ENCODE measurements at regions of chr3 and their contacts with region 1.

Region 1: DNA sequence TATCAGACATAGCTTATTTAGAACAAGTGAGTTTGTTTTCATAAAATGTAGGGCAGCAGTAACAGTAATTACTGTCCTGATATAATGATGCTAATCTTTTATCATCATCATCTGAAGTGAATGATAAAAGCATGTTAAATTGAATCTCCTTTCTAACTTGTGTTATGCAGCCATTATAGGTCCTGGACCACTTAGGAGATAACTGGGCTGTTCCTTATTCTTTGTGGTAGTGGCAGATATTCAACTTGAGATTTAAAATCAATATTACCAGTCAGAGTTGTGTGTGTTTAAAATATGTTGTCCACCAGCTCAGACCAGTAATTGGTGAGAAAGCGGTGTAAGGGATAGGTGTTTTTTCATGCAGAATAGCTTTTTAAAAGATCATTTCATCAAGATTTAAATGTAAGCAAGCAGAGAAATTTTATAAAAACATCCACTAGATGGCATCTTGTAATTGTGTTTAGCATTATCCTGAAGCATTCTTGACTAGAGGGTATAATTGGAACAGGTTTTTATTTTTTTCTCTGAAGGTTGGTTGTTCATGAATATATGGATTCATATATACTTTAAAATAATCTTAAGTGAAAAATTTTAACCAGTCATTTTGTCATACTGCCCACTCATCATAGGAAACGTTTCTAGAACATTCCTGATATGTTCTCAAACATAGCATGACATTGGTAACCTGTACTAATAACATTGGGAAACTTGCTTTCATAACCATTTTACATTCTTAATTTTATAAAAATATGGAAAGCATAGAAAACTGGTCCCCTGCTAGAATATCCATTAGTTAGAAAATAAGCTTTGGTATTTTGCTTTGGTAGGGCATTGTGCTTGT is 153.9 kb downstream of the BBX start:
- DNase-seq: no peak
- ATAC-seq: peak; percentile 57
- H3K4me3 ChIP-seq: no peak overlapping the region
- H3K27ac ChIP-seq: no peak overlapping the region
- H3K4me1 ChIP-seq: peaks cover 12% of the 10 kb centered on the region
- H3K27me3 ChIP-seq: no peaks in the 10 kb centered on the region
- CTCF ChIP-seq: peak; percentile 24 to 47 (median 39); a peak in 3 of 6 replicates
- EP300 ChIP-seq: no peak
- POLR2A ChIP-seq: no peak
- RAD21 ChIP-seq: peak; percentile 57

Region 2: DNA sequence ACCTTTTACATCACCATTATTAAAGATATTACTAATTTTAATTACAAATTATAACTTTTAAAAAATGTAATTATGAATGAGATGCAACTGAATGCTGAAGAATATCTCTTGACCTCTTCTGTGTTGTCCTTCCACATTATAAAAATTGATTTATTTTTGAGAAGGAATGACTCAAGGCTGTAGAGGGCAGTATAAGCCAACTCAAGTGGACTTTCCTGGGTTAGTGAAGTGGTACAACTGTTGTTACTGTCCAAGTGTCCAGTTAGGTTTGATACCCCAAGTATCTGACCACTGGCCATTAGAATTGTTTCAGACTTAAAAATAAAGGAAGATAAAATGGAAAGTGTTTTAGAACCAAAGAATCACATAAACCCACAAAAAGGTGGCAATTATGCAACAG is 102.0 kb before region 1 on chr3:
- CTCF ChIA-PET with region 1: interaction called, 81 read pairs
- POLR2A ChIA-PET with region 1: interaction called, 5 read pairs
- RAD21 ChIA-PET with region 1: interaction called, 13 read pairs
- SMC1A ChIA-PET with region 1: interaction called, 44 read pairs
- in situ Hi-C with region 1: no loop called
- intact Hi-C with region 1: no loop called
- DNase-seq: no peak
- ATAC-seq: peak; percentile 89
- H3K4me3 ChIP-seq: no peak overlapping the region
- H3K27ac ChIP-seq: no peak overlapping the region
- H3K4me1 ChIP-seq: no peaks in the 10 kb centered on the region
- H3K27me3 ChIP-seq: no peaks in the 10 kb centered on the region
- CTCF ChIP-seq: peak; percentile 45 to 70 (median 47); a peak in 5 of 6 replicates
- EP300 ChIP-seq: no peak
- POLR2A ChIP-seq: no peak
- RAD21 ChIP-seq: peak; percentile 85

Region 3: DNA sequence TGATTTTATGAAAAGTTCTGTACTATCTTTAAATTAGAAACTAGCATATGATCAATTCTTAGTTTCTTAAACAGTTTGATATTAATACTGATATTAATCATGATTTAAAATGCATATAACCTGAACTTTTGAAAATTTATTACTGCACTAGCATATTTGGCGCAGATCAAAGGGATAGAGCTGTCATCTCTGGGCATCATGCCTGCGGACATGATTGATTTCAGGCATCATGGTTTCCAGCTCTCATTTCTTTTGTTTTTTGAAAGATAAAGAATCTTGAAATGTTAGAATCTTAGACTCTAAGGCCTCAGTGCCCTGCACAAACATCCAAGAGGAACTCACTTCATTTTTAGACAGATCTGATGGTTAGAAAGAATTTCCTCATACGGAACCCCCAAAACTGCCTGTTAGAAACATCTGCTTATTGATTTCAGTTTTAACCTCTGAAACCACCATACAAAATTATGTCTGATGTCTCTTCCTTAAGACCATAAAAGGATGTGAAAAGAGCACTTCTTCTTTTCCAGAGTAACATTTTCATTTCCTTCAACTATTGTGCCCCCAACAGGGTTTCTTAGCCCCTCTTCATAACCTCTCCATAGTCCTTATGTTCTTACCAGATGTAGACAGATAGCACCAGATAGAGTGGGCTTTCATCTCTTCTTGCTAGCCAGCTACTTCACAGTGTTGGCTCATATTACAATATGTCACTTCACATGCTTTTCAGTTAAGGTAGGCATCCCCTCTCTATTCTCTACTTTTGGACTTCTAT is 43.2 kb before region 1 on chr3:
- CTCF ChIA-PET with region 1: interaction called, 30 read pairs
- POLR2A ChIA-PET with region 1: no interaction called
- RAD21 ChIA-PET with region 1: interaction called, 17 read pairs
- SMC1A ChIA-PET with region 1: interaction called, 18 read pairs
- in situ Hi-C with region 1: no loop called
- intact Hi-C with region 1: no loop called
- DNase-seq: peak; percentile 56
- ATAC-seq: peak; percentile 94
- H3K4me3 ChIP-seq: peak overlapping the region; percentile 40; the same call in 1 of the 2 replicates
- H3K27ac ChIP-seq: peak overlapping the region; percentile 63
- H3K4me1 ChIP-seq: peaks cover 20% of the 10 kb centered on the region
- H3K27me3 ChIP-seq: no peaks in the 10 kb centered on the region
- CTCF ChIP-seq: no peak
- EP300 ChIP-seq: peak; percentile 63 to 77
- POLR2A ChIP-seq: no peak
- RAD21 ChIP-seq: no peak

Region 4: GRCh38 chr3:107690522-107691138 is 13.9 kb after region 1 on chr3:
- CTCF ChIA-PET with region 1: interaction called, 98 read pairs
- POLR2A ChIA-PET with region 1: interaction called, 3 read pairs
- RAD21 ChIA-PET with region 1: interaction called, 7 read pairs
- SMC1A ChIA-PET with region 1: interaction called, 34 read pairs
- in situ Hi-C with region 1: no loop called
- intact Hi-C with region 1: no loop called
- DNase-seq: no peak
- ATAC-seq: peak; percentile 90
- H3K4me3 ChIP-seq: no peak overlapping the region
- H3K27ac ChIP-seq: no peak overlapping the region
- H3K4me1 ChIP-seq: no peaks in the 10 kb centered on the region
- H3K27me3 ChIP-seq: no peaks in the 10 kb centered on the region
- CTCF ChIP-seq: peak; percentile 32 to 50 (median 39); a peak in 4 of 6 replicates
- EP300 ChIP-seq: no peak
- POLR2A ChIP-seq: no peak
- RAD21 ChIP-seq: peak; percentile 33; the same call in 1 of the 2 replicates

Region 5: DNA sequence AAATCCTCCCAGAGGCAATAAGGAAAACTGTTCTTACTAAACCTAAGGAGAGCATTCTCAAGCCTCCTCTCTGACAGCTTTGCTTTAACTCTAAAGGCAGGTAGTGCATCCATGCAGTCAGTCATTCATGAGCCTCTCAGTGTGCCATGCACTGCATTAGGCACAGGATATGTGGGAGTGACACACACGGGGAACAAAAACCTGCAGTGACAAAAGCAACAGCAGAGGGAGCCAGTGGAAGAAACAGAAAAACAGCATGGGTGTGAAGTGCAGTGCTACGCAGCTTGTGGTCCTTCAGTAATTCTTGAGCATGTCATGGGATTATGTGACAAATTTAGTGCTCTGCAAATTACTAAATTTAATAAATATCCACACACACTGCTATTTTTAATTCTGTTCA is 76.8 kb after region 1 on chr3:
- CTCF ChIA-PET with region 1: interaction called, 78 read pairs
- POLR2A ChIA-PET with region 1: no interaction called
- RAD21 ChIA-PET with region 1: interaction called, 3 read pairs
- SMC1A ChIA-PET with region 1: interaction called, 23 read pairs
- in situ Hi-C with region 1: no loop called
- intact Hi-C with region 1: no loop called
- DNase-seq: no peak
- ATAC-seq: peak; percentile 70
- H3K4me3 ChIP-seq: no peak overlapping the region
- H3K27ac ChIP-seq: no peak overlapping the region
- H3K4me1 ChIP-seq: no peaks in the 10 kb centered on the region
- H3K27me3 ChIP-seq: no peaks in the 10 kb centered on the region
- CTCF ChIP-seq: peak; percentile 41 to 45 (median 44); a peak in 5 of 6 replicates
- EP300 ChIP-seq: no peak
- POLR2A ChIP-seq: no peak
- RAD21 ChIP-seq: peak; percentile 36; the same call in 1 of the 2 replicates

Region 6: DNA sequence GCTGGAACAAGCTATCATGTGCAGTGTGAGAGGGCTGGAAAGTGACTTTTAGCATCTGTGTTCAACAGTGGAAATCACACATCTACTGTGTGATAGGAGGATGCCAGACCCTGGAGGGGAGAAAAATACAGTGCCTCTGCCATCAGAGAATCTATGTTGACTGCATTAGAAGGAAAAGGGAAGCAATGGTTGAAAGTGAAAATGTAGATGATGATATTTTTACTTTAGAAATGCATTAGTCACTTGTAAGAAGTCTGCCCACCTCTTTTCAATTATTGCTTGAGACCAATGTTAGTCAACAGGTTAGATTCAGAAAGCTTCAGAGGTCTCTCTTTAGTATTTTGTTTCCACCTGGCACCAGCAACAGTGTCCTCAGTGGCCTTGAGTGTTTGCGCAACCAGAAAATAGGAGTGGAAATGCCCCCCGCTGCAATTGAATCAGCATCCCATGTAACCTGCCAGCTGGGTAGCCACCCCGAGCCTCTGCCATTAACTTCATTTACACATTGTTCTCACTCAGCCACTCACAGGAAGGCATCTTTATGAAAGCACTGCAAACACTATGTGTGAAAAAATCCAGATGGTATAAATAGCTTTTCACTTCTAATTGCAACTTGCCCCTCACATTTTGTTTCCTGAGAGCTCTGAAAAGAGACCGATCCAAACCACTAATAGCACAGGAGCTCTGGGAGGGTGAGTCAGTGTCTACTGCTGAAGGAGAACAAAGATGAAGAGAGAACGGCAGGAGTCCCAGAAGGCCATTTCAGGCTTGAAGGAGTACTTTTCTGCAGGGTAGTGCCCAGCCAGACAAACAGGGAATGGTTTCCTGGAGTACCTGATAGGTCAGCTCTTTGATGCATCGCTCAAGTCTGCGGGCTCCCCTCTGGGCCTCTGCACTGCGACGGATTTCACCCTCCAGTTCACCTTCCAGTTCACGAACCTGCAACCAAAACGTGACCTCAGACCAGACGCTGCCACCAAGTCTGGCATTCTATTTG is 711.7 kb after region 1 on chr3:
- CTCF ChIA-PET with region 1: no interaction called
- POLR2A ChIA-PET with region 1: no interaction called
- RAD21 ChIA-PET with region 1: no interaction called
- SMC1A ChIA-PET with region 1: no interaction called
- in situ Hi-C with region 1: no loop called
- intact Hi-C with region 1: no loop called
- DNase-seq: peak; percentile 70
- ATAC-seq: peak; percentile 84
- H3K4me3 ChIP-seq: peak overlapping the region; percentile 42
- H3K27ac ChIP-seq: peak overlapping the region; percentile 33; the same call in 1 of the 2 replicates
- H3K4me1 ChIP-seq: peaks cover 33% of the 10 kb centered on the region
- H3K27me3 ChIP-seq: no peaks in the 10 kb centered on the region
- CTCF ChIP-seq: no peak
- EP300 ChIP-seq: peak; percentile 38 to 48; a peak in 1 of 4 replicates
- POLR2A ChIP-seq: no peak
- RAD21 ChIP-seq: no peak

Region 7: DNA sequence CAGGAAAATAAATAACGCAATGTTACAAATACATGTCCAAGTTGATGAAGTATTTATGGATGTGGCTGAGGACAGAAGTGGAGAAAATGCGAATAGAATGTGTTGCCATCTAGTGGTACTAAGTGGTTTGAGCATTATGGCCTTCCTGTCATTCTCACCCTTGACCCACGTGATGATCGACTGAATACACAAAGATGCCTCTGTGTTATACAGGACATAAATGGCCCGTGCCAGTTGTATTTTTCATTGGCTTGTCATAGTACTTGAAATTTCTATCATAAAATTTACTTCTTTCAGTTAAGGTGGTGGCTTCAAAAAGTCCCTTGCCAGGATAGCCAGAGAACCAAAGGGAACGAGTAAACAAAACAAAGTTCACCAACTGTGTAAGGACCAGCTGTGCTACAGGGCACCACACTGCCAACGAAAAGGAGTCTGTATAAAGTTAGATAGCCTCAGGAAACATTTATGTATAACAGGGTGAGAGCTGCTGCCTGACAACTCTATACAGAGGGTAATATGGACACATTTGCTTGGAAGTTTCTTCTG is 730.0 kb after region 1 on chr3:
- CTCF ChIA-PET with region 1: interaction called, 10 read pairs
- POLR2A ChIA-PET with region 1: no interaction called
- RAD21 ChIA-PET with region 1: interaction called, 3 read pairs
- SMC1A ChIA-PET with region 1: interaction called, 5 read pairs
- in situ Hi-C with region 1: no loop called
- intact Hi-C with region 1: no loop called
- DNase-seq: peak; percentile 68
- ATAC-seq: peak; percentile 99
- H3K4me3 ChIP-seq: no peak overlapping the region
- H3K27ac ChIP-seq: no peak overlapping the region
- H3K4me1 ChIP-seq: peaks cover 4% of the 10 kb centered on the region; the same call in 1 of the 2 replicates
- H3K27me3 ChIP-seq: no peaks in the 10 kb centered on the region
- CTCF ChIP-seq: peak; percentile 67 to 89 (median 86)
- EP300 ChIP-seq: no peak
- POLR2A ChIP-seq: no peak
- RAD21 ChIP-seq: peak; percentile 82